ENCODE measurements at regions of chr17 and their contacts with region 1.

Region 1: GRCh38 chr17:7561028-7561575 is 617 bp upstream of the SENP3 start:
- DNase-seq: peak; percentile 86
- H3K4me3 ChIP-seq: peak overlapping the region; percentile 58 to 80 (median 62)
- H3K27ac ChIP-seq: peak overlapping the region; percentile 60
- H3K4me1 ChIP-seq: peaks cover 36% of the 10 kb centered on the region
- H3K27me3 ChIP-seq: no peaks in the 10 kb centered on the region
- CTCF ChIP-seq: peak; percentile 82 to 96
- POLR2A ChIP-seq: no peak

Region 2: GRCh38 chr17:7323731-7324437 is 237.2 kb before region 1 on chr17:
- CTCF ChIA-PET with region 1: interaction called, 10 read pairs
- POLR2A ChIA-PET with region 1: interaction called, 3 read pairs
- dilution Hi-C with region 1: no loop called
- intact Hi-C with region 1: loop called (anchors 1 kb)
- DNase-seq: peak; percentile 32
- H3K4me3 ChIP-seq: no peak overlapping the region
- H3K27ac ChIP-seq: no peak overlapping the region
- H3K4me1 ChIP-seq: peaks cover 6% of the 10 kb centered on the region
- H3K27me3 ChIP-seq: no peaks in the 10 kb centered on the region
- CTCF ChIP-seq: peak; percentile 91 to 95
- POLR2A ChIP-seq: no peak

Region 3: GRCh38 chr17:7394452-7395191 is 166.5 kb before region 1 on chr17 and contains the start of gene PLSCR3:
- CTCF ChIA-PET with region 1: interaction called, 8 read pairs
- POLR2A ChIA-PET with region 1: no interaction called
- dilution Hi-C with region 1: no loop called
- intact Hi-C with region 1: loop called (anchors 2 kb)
- DNase-seq: peak; percentile 92
- H3K4me3 ChIP-seq: peak within 1 kb of the TSS; percentile 58 to 93 (median 92)
- H3K27ac ChIP-seq: peak within 1 kb of the TSS; percentile 45
- H3K4me1 ChIP-seq: peaks cover 16% of the 10 kb centered on the region
- H3K27me3 ChIP-seq: no peaks in the 10 kb centered on the region
- CTCF ChIP-seq: peak in 1 of 2 donors; percentile 55
- POLR2A ChIP-seq: peak; percentile 90
- total RNA-seq, gene PLSCR3: 54.5 and 59.9 TPM in 2 replicates

Region 4: GRCh38 chr17:7444682-7445618 is 116.2 kb before region 1 on chr17 and contains the start of gene CHRNB1:
- CTCF ChIA-PET with region 1: interaction called, 17 read pairs
- POLR2A ChIA-PET with region 1: no interaction called
- dilution Hi-C with region 1: no loop called
- intact Hi-C with region 1: no loop called
- DNase-seq: peak; percentile 35
- H3K4me3 ChIP-seq: peak within 1 kb of the TSS; percentile 14 to 34 (median 25)
- H3K27ac ChIP-seq: no peak within 1 kb of the TSS
- H3K4me1 ChIP-seq: peaks cover 15% of the 10 kb centered on the region
- H3K27me3 ChIP-seq: peaks cover 22 to 30% of the 10 kb centered on the region in 2 experiments
- CTCF ChIP-seq: no peak
- POLR2A ChIP-seq: no peak
- total RNA-seq, gene CHRNB1: 5.4 and 5.6 TPM in 2 replicates

Region 5: GRCh38 chr17:7509937-7510336 is 51.2 kb before region 1 on chr17:
- CTCF ChIA-PET with region 1: interaction called, 314 read pairs
- POLR2A ChIA-PET with region 1: interaction called, 3 read pairs
- dilution Hi-C with region 1: no loop called
- intact Hi-C with region 1: loop called (anchors 1 kb)
- DNase-seq: no peak
- H3K4me3 ChIP-seq: no peak overlapping the region
- H3K27ac ChIP-seq: no peak overlapping the region
- H3K4me1 ChIP-seq: no peaks in the 10 kb centered on the region
- H3K27me3 ChIP-seq: no peaks in the 10 kb centered on the region
- CTCF ChIP-seq: no peak
- POLR2A ChIP-seq: no peak

Region 6: DNA sequence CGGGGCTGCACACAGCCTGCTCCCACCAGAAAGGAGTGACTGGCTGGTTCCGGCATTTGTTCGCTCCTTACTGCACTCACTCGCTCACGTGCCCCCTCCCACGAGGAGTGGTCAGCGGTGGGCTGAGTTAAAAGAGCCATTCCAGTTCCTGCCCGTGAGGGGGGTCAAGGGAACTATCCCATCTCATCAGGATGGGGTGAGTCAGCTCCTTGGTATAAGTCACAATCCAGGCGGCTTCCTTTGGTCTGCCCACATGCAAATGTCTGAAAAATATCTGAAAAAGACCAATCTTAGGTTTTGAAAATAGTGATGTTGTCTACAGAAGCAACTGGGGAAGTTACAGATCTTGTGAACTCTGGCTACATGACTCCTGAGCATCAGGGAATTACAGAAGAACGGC is 22.2 kb before region 1 on chr17:
- CTCF ChIA-PET with region 1: interaction called, 12 read pairs
- POLR2A ChIA-PET with region 1: no interaction called
- dilution Hi-C with region 1: no loop called
- intact Hi-C with region 1: no loop called
- DNase-seq: peak; percentile 21
- H3K4me3 ChIP-seq: no peak overlapping the region
- H3K27ac ChIP-seq: no peak overlapping the region
- H3K4me1 ChIP-seq: no peaks in the 10 kb centered on the region
- H3K27me3 ChIP-seq: peaks cover 0 to 9% of the 10 kb centered on the region in 2 experiments
- CTCF ChIP-seq: no peak
- POLR2A ChIP-seq: no peak

Region 7: GRCh38 chr17:7583253-7584109 is 22.4 kb after region 1 on chr17 and contains the start of gene MPDU1:
- CTCF ChIA-PET with region 1: interaction called, 61 read pairs
- POLR2A ChIA-PET with region 1: interaction called, 3 read pairs
- dilution Hi-C with region 1: no loop called
- intact Hi-C with region 1: no loop called
- DNase-seq: peak; percentile 98
- H3K4me3 ChIP-seq: peak within 1 kb of the TSS; percentile 54 to 90 (median 66)
- H3K27ac ChIP-seq: peak within 1 kb of the TSS; percentile 88
- H3K4me1 ChIP-seq: peaks cover 32% of the 10 kb centered on the region
- H3K27me3 ChIP-seq: no peaks in the 10 kb centered on the region
- CTCF ChIP-seq: no peak
- POLR2A ChIP-seq: peak; percentile 94
- total RNA-seq, gene MPDU1: 61.2 and 78.0 TPM in 2 replicates